GM12878 (cell line): ENCODE measurements at regions of chr20 and their contacts with region 1.

Region 1: GRCh38 chr20:33773412-33774089 is 37.6 kb upstream of the CHMP4B start:
- DNase-seq: peak; percentile 85
- ATAC-seq: peak; percentile 87
- H3K4me3 ChIP-seq: no peak overlapping the region
- H3K27ac ChIP-seq: peak overlapping the region; percentile 83
- H3K4me1 ChIP-seq: peaks cover 33% of the 10 kb centered on the region
- H3K27me3 ChIP-seq: no peaks in the 10 kb centered on the region
- CTCF ChIP-seq: no peak
- EP300 ChIP-seq: peak; percentile 66 to 80; a peak in 2 of 4 replicates
- POLR2A ChIP-seq: no peak
- RAD21 ChIP-seq: no peak

Region 2: GRCh38 chr20:33686100-33686983 is 87.2 kb before region 1 on chr20 and contains the start of gene E2F1:
- CTCF ChIA-PET with region 1: no interaction called
- POLR2A ChIA-PET with region 1: no interaction called
- RAD21 ChIA-PET with region 1: interaction called, 3 read pairs
- SMC1A ChIA-PET with region 1: interaction called, 3 read pairs
- in situ Hi-C with region 1: no loop called
- intact Hi-C with region 1: loop called (anchors 5 kb)
- DNase-seq: peak; percentile 61
- ATAC-seq: peak; percentile 95
- H3K4me3 ChIP-seq: peak within 1 kb of the TSS; percentile 79
- H3K27ac ChIP-seq: peak within 1 kb of the TSS; percentile 88
- H3K4me1 ChIP-seq: peaks cover 33% of the 10 kb centered on the region
- H3K27me3 ChIP-seq: no peaks in the 10 kb centered on the region
- CTCF ChIP-seq: peak in 2 of 3 experiments; percentile 21 to 28; a peak in 2 of 6 replicates
- EP300 ChIP-seq: no peak
- POLR2A ChIP-seq: peak; percentile 57; the same call in 1 of the 2 replicates
- RAD21 ChIP-seq: no peak
- polyA plus RNA-seq, gene E2F1: 0.29 to 2.1 TPM

Region 3: DNA sequence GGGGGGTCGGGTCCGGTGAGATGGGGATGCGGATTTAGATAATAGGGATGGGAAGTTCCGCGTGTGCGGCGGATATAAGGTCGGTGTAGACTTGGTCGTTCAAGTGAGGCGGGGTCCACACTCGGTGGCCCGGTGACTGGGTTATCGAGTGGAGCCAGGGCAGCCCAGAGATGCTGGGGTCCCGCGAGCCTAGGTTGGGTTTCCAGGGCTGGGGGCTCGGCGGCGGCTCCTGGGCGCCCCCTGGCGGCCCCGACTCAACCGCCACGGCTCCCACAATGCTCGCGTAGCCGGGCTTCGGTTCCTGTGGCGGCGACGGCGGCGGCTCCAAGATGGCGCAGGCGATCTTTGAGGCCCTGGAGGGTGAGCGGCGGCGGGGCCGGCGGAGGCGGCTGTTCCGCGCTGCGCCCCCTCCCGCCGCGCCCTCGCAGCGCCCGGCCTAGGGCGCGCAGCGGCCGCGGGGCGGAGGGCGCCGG is 41.8 kb before region 1 on chr20 and contains the start of gene ZNF341:
- CTCF ChIA-PET with region 1: interaction called, 10 read pairs
- POLR2A ChIA-PET with region 1: interaction called, 9 read pairs
- RAD21 ChIA-PET with region 1: interaction called, 24 read pairs
- SMC1A ChIA-PET with region 1: interaction called, 20 read pairs
- in situ Hi-C with region 1: no loop called
- intact Hi-C with region 1: loop called (anchors 1 kb)
- DNase-seq: peak; percentile 16
- ATAC-seq: peak; percentile 83
- H3K4me3 ChIP-seq: peak within 1 kb of the TSS; percentile 82
- H3K27ac ChIP-seq: peak within 1 kb of the TSS; percentile 77
- H3K4me1 ChIP-seq: peaks cover 7% of the 10 kb centered on the region
- H3K27me3 ChIP-seq: no peaks in the 10 kb centered on the region
- CTCF ChIP-seq: peak; percentile 79 to 89 (median 84)
- EP300 ChIP-seq: no peak
- POLR2A ChIP-seq: peak; percentile 57; the same call in 1 of the 2 replicates
- RAD21 ChIP-seq: peak; percentile 56
- polyA plus RNA-seq, gene ZNF341: 0.18 to 0.46 TPM

Region 4: GRCh38 chr20:33883164-33883563 is 109.6 kb after region 1 on chr20:
- CTCF ChIA-PET with region 1: no interaction called
- POLR2A ChIA-PET with region 1: no interaction called
- RAD21 ChIA-PET with region 1: no interaction called
- SMC1A ChIA-PET with region 1: no interaction called
- in situ Hi-C with region 1: no loop called
- intact Hi-C with region 1: loop called (anchors 2 kb)
- DNase-seq: peak; percentile 73
- ATAC-seq: peak; percentile 94
- H3K4me3 ChIP-seq: peak overlapping the region; percentile 19; the same call in 1 of the 2 replicates
- H3K27ac ChIP-seq: peak overlapping the region; percentile 86
- H3K4me1 ChIP-seq: peaks cover 39% of the 10 kb centered on the region
- H3K27me3 ChIP-seq: no peaks in the 10 kb centered on the region
- CTCF ChIP-seq: peak in 2 of 3 experiments; percentile 10 to 23; a peak in 3 of 6 replicates
- EP300 ChIP-seq: peak in 1 of 2 experiments; percentile 56; a peak in 2 of 4 replicates
- POLR2A ChIP-seq: no peak
- RAD21 ChIP-seq: peak; percentile 36; the same call in 1 of the 2 replicates

Region 5: GRCh38 chr20:34180460-34181120 is 407.0 kb after region 1 on chr20:
- CTCF ChIA-PET with region 1: no interaction called
- POLR2A ChIA-PET with region 1: no interaction called
- RAD21 ChIA-PET with region 1: no interaction called
- SMC1A ChIA-PET with region 1: no interaction called
- in situ Hi-C with region 1: no loop called
- intact Hi-C with region 1: no loop called
- DNase-seq: no peak
- ATAC-seq: no peak
- H3K4me3 ChIP-seq: no peak overlapping the region
- H3K27ac ChIP-seq: no peak overlapping the region
- H3K4me1 ChIP-seq: no peaks in the 10 kb centered on the region
- H3K27me3 ChIP-seq: peaks cover 0 to 4% of the 10 kb centered on the region in 2 experiments; a peak in 1 of 4 replicates
- CTCF ChIP-seq: no peak
- EP300 ChIP-seq: no peak
- POLR2A ChIP-seq: no peak
- RAD21 ChIP-seq: no peak